Psoas muscle (tissue), 8 donors: ENCODE measurements at regions of chr22 and their contacts with region 1.

Region 1: GRCh38 chr22:28976588-28976987 is 85.0 kb downstream of the C22orf31 start:
- DNase-seq: no peak
- ATAC-seq: peak in 2 of 4 donors; percentile 22 to 41
- H3K4me3 ChIP-seq: no peak overlapping the region
- H3K27ac ChIP-seq: peak overlapping the region; percentile 86
- H3K4me1 ChIP-seq: peaks cover 46% of the 10 kb centered on the region
- H3K27me3 ChIP-seq: no peaks in the 10 kb centered on the region
- CTCF ChIP-seq: no peak

Region 2: DNA sequence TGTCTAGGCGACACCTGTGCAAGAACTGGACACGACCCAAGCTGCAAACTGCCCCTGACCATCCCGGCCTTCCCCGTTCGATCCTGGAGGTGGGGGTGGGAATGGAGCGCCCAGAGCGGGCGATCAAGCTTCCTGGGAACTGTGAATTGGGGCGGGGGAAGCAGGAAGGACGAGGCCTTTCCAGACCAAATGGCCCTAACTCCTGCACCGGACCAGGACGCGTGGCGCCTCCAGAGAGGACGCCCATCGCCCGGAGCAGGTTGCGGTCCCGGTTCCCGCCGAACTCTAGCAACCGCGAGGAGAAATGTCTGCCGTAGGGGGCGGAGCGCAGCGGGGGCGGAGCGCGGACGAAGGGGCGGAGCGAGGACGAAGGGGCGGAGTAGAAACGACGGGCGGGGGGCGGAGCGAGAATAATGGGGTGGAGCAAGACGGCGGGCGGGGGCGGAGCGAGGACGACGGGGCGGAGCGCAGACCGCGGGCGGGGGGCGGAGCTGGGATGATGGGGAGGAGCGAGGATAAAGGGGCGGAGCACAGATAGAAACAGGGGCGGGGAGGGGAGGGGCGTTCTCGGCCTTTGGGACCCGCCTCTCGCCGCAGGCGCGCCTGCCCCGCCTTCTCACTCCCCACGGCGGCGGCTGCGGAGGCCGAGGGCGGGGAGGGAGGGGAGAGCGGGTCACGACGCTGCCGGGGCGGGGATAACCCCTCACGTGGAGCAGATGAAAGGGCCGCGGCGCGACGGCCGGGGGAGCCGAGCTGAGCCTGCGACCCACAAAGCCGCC is 93.5 kb before region 1 on chr22 and contains the start of gene ZNRF3:
- intact Hi-C with region 1: loop called in 1 of 2 experiments (anchors 5 kb)
- DNase-seq: peak; percentile 94 to 96
- ATAC-seq: peak; percentile 95 to 97 (median 96)
- H3K4me3 ChIP-seq: peak within 1 kb of the TSS; percentile 81
- H3K27ac ChIP-seq: peak within 1 kb of the TSS; percentile 83
- H3K4me1 ChIP-seq: peaks cover 29% of the 10 kb centered on the region
- H3K27me3 ChIP-seq: no peaks in the 10 kb centered on the region
- CTCF ChIP-seq: no peak
- total RNA-seq, gene ZNRF3: 4.9 to 8.5 (median 7.4) TPM

Region 3: DNA sequence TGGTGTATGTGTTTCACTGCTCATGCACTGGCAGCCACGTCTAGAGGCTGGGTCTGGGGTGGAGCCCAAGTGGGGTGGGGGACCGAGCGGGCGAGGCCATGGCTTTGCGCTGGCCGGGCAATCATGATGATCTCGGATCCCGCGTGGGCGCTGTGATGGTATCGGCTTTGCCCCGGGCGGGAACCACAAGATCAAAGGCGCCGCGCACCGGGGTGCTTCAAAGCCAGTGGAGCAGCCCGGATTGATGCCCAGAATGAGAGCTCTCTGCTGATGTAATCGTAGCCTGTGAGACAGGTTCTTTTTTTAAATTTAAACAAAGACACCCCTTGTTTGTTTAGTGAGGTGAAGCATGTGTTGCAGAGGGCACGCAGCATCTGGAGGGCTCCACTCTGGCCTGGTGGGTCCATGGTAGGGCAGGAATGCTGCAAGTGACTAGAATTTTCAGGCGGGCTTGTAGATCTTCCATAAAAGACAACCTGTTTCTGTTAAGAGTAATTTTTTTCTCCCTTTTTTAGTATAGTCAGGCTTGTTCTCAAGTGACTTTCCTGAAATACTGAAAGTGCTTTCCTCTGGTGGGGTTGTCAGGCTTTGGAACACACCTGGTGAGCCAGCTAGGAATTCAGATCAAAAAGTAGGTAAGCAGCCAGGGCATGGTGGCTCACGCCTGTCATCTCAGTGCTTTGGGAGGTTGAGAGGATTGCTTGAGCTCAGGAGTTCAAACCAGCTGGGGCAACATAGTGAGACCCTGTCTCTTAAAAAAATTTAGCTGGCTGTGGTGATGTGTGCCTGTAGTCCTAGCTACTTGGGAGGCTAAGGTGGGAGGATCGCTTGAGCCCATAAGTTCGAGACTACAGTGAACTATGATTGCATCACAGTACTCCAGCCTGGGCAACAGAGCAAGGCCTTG is 52.5 kb before region 1 on chr22:
- intact Hi-C with region 1: loop called in 1 of 2 experiments (anchors 5 kb)
- DNase-seq: peak; percentile 61 to 78
- ATAC-seq: peak; percentile 84 to 94 (median 86)
- H3K4me3 ChIP-seq: peak overlapping the region; percentile 23
- H3K27ac ChIP-seq: peak overlapping the region; percentile 70
- H3K4me1 ChIP-seq: peaks cover 12% of the 10 kb centered on the region
- H3K27me3 ChIP-seq: no peaks in the 10 kb centered on the region
- CTCF ChIP-seq: no peak

Region 4: GRCh38 chr22:29040385-29041275 is 64.0 kb after region 1 on chr22:
- intact Hi-C with region 1: loop called in 1 of 2 experiments (anchors 2 kb)
- DNase-seq: peak in 1 of 2 donors; percentile 68
- ATAC-seq: peak; percentile 71 to 84 (median 79)
- H3K4me3 ChIP-seq: no peak overlapping the region
- H3K27ac ChIP-seq: no peak overlapping the region
- H3K4me1 ChIP-seq: peaks cover 11% of the 10 kb centered on the region
- H3K27me3 ChIP-seq: no peaks in the 10 kb centered on the region
- CTCF ChIP-seq: peak; percentile 98

Region 5: GRCh38 chr22:29202212-29203192 is 225.9 kb after region 1 on chr22:
- intact Hi-C with region 1: no loop called
- DNase-seq: peak; percentile 56 to 76
- ATAC-seq: peak; percentile 34 to 55 (median 37)
- H3K4me3 ChIP-seq: no peak overlapping the region
- H3K27ac ChIP-seq: no peak overlapping the region
- H3K4me1 ChIP-seq: no peaks in the 10 kb centered on the region
- H3K27me3 ChIP-seq: peaks cover 0 to 14% (median 9%) of the 10 kb centered on the region in 3 donors
- CTCF ChIP-seq: peak; percentile 27